ENCODE measurements at regions of chr5 and their contacts with region 1.

Region 1: DNA sequence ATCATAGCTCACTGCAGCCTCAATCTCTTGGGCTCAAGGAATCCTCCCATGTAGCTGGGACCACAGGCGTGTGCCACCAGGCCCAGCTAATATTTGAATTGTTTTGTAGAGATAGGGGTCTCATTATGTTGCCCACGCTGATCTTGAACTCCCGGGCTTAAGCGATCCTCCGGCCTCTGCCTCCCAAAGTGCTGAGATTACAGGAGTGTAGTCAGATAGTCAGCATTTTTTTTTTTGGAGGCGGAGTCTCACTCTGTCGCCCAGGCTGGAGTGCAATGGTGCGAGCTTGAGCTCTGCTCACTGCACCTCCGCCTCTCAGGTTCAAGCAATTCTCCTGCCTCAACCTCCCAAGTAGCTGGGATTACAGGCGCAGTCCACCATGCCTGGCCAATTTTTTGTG is 1.6 kb upstream of the SAR1B start:
- DNase-seq: no peak
- ATAC-seq: no peak
- H3K4me3 Mint-ChIP-seq: peak overlapping the region; percentile 15
- H3K27ac Mint-ChIP-seq: no peak overlapping the region
- H3K4me1 Mint-ChIP-seq: peaks cover 17% of the 10 kb centered on the region
- H3K27me3 Mint-ChIP-seq: no peaks in the 10 kb centered on the region

Region 2: DNA sequence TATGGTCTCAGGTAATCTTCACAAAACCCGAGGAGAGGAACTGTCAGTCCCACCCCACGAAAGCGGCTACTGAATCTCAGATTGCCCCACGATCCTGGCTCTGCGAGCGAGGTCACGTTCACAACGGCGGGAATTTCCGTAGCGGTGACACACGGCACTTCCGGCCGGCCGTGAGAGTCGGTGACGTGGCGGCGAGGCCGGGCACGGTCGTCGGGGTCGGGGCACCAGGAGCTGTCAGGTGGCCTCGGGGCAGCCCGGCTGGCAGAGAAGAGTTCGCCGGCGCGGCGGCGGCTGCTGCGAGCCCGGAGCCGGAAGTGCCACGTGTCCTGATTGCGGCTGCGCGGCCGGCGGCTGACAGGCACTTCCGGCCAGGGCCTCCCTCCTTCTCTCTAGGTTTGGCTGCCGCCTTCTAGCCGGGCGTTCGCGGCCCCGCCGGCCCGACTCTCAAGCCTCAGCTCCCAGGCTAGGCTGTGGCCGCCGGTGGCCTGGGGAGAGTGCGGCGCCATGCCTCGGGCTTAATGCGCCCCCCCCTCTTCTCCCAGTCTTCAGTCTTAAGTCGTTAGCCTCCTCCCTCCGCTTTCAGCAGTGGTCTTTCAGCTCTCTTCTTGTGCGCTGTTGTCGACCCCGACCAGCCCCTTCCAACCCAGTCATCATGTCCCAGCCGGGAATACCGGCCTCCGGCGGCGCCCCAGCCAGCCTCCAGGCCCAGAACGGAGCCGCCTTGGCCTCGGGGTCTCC is 14.4 kb after region 1 on chr5 and contains the start of gene SEC24A:
- CTCF ChIA-PET with region 1: interaction called, 10 read pairs
- DNase-seq: peak; percentile 94
- ATAC-seq: peak; percentile 92
- H3K4me3 Mint-ChIP-seq: peak within 1 kb of the TSS; percentile 87
- H3K27ac Mint-ChIP-seq: peak within 1 kb of the TSS; percentile 96
- H3K4me1 Mint-ChIP-seq: peaks cover 28% of the 10 kb centered on the region
- H3K27me3 Mint-ChIP-seq: no peaks in the 10 kb centered on the region
- total RNA-seq, gene SEC24A: 19.8 to 25.2 TPM

Region 3: GRCh38 chr5:134659456-134659855 is 25.2 kb after region 1 on chr5:
- CTCF ChIA-PET with region 1: no interaction called
- DNase-seq: no peak
- ATAC-seq: no peak
- H3K4me3 Mint-ChIP-seq: no peak overlapping the region
- H3K27ac Mint-ChIP-seq: no peak overlapping the region
- H3K4me1 Mint-ChIP-seq: peaks cover 16% of the 10 kb centered on the region
- H3K27me3 Mint-ChIP-seq: no peaks in the 10 kb centered on the region

Region 4: DNA sequence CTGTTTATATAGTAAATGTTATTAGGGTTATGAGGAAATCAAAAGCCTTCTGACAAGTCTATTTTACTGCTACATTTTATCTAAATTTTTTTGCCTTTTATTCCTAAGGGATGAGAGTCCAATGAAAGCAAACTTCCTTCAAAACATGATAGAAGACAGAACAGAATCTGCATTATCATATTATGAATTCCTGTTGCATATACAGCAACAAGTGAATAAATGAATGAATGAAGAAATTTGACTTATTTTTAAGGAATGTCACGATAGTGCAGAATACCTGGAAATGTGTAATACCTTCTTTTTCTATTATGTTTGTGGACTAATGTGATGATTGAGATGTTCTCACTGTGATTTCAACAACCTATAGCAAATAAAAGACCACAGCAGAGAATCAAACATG is 90.6 kb after region 1 on chr5:
- CTCF ChIA-PET with region 1: no interaction called
- DNase-seq: no peak
- ATAC-seq: no peak
- H3K4me3 Mint-ChIP-seq: no peak overlapping the region
- H3K27ac Mint-ChIP-seq: no peak overlapping the region
- H3K4me1 Mint-ChIP-seq: no peaks in the 10 kb centered on the region
- H3K27me3 Mint-ChIP-seq: no peaks in the 10 kb centered on the region

Region 5: DNA sequence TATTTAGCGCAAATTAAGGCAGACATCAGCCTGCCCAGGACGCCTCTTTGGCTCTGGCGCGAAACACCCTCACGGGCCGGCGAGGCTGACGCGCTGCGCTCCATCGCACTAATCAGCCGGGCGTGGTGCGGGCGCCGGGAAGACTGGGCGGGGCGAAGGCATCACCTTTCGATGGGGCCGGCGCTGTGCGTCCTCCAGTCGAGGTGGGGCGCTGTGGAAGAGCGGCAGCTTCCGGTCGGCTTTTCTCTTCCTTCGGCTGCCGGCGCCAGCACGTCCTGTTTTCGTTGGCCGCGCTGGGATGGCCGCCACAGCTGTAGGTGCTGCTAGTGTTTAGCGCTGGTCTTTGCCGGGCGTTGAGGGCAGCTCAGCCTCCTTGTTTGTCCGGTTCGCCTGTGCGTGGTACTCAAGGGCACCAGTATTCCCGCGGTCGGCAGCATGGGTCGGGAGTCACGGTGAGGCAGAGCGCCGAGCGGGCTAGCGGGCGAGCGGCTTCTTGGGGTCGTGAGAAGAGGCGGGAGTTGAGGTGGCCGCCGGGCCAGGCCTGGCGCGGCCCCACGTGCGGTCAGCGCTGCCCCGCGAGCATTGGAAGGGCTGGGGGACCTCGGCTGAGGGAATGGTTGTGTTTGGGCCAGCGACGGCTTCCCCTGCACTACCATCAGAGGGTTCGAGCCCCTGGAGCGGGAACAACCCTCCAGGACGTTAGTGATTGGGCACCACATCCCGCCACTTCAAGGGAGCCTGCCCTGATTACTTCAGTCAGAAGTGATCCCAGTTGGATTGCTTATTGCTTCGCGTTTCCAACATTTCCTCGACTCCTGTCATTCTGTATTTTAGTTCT is 124.5 kb after region 1 on chr5 and contains the start of gene DDX46:
- CTCF ChIA-PET with region 1: no interaction called
- DNase-seq: peak; percentile 96
- ATAC-seq: peak; percentile 99
- H3K4me3 Mint-ChIP-seq: peak within 1 kb of the TSS; percentile 100
- H3K27ac Mint-ChIP-seq: peak within 1 kb of the TSS; percentile 94
- H3K4me1 Mint-ChIP-seq: peaks cover 37% of the 10 kb centered on the region
- H3K27me3 Mint-ChIP-seq: no peaks in the 10 kb centered on the region
- total RNA-seq, gene DDX46: 75.9 to 77.0 TPM

Measured in activated CD8-positive, alpha-beta memory T cell treated with anti-CD3 and anti-CD28 coated beads, Interleukin-2, amount 10 ng/mL, durations not matched to agents 7 days and 5 days (primary cell).